Adrenal gland (tissue), 19 donors: ENCODE measurements at regions of chr7 and their contacts with region 1.

Region 1: GRCh38 chr7:30164567-30164966 is 29.8 kb downstream of the MTURN start:
- DNase-seq: peak in 2 of 7 donors; percentile 45 to 50
- H3K4me3 ChIP-seq: no peak overlapping the region
- H3K27ac ChIP-seq: no peak overlapping the region
- H3K4me1 ChIP-seq: peaks cover 0 to 22% of the 10 kb centered on the region in 2 donors
- H3K27me3 ChIP-seq: no peaks in the 10 kb centered on the region
- CTCF ChIP-seq: peak; percentile 44 to 74 (median 62)
- POLR2A ChIP-seq: no peak

Region 2: DNA sequence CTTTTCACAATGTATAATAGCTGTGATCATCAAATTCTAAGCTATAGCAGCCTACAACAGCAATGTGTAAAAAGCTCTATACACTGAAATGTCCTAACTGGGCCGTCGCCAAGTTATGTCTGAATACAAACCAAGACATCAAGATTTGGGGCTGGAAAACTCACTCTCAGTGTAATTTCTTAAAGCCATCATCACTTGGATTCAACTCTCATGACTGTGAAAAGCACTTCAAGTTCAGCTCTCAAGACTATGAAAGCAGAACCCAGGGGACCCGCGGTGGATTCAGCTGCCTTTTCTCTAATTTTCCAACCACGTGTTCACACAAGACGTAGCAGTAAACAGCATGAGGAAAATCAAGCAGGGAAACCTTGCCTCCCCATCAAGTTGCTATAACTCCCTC is 104.0 kb after region 1 on chr7:
- intact Hi-C with region 1: loop called (anchors 5 to 10 kb)
- DNase-seq: no peak
- H3K4me3 ChIP-seq: no peak overlapping the region
- H3K27ac ChIP-seq: no peak overlapping the region
- H3K4me1 ChIP-seq: no peaks in the 10 kb centered on the region
- H3K27me3 ChIP-seq: no peaks in the 10 kb centered on the region
- CTCF ChIP-seq: no peak
- POLR2A ChIP-seq: no peak

Region 3: DNA sequence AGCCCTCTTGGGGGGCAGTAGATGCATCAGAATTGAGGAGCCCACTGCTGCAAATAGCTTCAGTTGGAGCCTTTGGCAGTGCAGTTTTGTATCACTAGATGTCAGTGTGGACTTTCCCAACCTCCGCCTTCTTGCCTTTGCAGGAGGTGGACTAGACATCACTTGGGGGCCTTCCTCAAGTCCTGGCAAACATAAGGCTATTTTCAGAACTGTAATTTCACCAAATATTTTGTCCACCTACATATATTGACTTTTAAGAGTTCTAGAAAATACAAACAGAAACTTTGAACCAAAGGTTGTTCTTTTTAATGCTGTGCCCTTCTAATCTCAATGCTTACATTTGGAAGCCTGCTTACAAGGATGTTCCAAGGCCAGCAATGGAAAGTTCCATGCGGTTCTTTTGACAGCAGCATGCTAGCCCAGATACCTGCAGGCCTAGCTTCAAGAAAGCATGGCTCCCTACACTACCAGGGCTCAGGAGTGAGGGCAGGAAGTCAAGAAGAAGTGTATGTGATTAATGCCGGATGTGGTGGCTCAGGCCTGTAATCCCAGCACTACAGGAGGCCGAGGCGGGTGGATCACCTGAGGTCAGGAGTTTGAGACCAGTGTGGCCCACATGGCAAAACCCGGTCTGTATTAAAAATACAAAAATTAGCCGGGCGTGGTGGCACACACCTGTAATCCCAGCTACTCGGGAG is 111.8 kb after region 1 on chr7:
- intact Hi-C with region 1: loop called in 1 of 2 experiments (anchors 10 kb)
- DNase-seq: peak; percentile 40 to 69 (median 49)
- H3K4me3 ChIP-seq: no peak overlapping the region
- H3K27ac ChIP-seq: no peak overlapping the region
- H3K4me1 ChIP-seq: no peaks in the 10 kb centered on the region
- H3K27me3 ChIP-seq: no peaks in the 10 kb centered on the region
- CTCF ChIP-seq: peak; percentile 29 to 70 (median 60)
- POLR2A ChIP-seq: no peak

Region 4: DNA sequence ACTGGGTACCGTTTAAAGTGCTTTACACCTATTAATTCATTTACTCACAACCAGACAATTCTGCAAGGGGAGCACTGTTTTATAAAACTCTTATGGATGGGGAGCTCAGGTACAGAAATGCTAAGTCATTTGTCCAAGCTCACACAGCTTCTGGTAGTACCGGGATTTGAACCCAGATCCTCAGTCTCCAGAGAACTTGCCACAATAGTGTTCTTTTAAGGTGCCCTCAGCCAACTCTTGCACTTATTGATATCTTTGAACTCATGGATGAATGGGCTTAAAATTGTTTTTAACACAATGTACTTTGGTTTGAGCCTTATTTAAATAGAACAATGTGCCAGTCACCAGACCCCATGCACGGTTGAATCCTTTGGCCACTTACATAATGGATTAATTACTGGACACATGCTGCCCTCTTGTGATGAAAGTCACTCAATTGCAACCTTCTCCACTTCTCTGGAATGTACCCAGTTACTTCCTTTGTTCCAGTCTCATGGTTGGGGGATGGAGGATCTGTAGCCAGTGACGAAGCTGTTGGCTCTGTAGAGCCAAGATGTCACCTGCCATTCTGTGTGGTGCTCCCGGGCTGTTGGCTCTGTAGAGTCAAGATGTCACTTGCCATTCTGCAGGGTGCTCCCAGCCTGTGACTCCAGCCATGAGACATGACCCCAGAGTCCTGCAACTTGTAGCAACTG is 248.4 kb after region 1 on chr7:
- intact Hi-C with region 1: loop called (anchors 5 kb)
- DNase-seq: peak in 6 of 7 donors; percentile 41 to 76 (median 53)
- H3K4me3 ChIP-seq: no peak overlapping the region
- H3K27ac ChIP-seq: no peak overlapping the region
- H3K4me1 ChIP-seq: peaks cover 0 to 3% of the 10 kb centered on the region in 2 donors
- H3K27me3 ChIP-seq: no peaks in the 10 kb centered on the region
- CTCF ChIP-seq: peak in 5 of 6 experiments; percentile 51 to 75 (median 65)
- POLR2A ChIP-seq: no peak

Region 5: DNA sequence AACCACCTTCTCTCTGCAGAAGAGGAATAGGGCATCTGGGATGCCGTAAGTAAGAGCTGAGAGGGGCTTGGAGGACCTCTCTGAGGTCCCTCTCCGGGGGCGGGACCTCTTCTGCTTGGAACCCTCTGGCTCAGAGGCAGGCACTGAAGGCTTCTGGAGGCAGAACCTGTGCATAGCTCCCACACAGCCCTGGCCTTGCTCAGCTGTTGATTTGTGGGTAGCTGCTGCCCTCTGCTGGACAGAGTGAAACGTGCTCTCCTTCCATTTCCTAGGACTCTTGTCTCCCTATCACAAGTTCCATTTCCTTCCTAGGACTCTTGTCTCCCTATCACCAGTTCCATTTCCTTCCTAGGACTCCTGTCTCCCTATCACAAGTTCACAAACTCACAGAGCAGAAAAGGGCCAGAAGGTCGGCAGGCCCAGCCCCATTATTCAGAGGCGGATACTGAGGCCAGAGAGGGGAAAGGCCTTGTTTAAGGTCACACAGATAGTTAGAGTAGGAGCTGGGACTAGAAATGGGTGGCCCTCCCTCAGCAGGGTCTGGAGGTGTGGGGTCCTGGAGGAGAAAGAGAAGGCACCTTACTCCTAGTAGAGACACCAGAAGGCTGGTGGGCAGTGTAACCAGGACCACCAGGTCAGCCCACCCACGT is 399.8 kb after region 1 on chr7:
- intact Hi-C with region 1: loop called in 1 of 2 experiments (anchors 10 kb)
- DNase-seq: peak; percentile 78 to 95 (median 84)
- H3K4me3 ChIP-seq: no peak overlapping the region
- H3K27ac ChIP-seq: no peak overlapping the region
- H3K4me1 ChIP-seq: peaks cover 0 to 12% of the 10 kb centered on the region in 2 donors
- H3K27me3 ChIP-seq: no peaks in the 10 kb centered on the region
- CTCF ChIP-seq: peak; percentile 73 to 97 (median 90)
- POLR2A ChIP-seq: no peak